Activated CD8-positive, alpha-beta T cell treated with anti-CD3 and anti-CD28 coated beads for 36 hours (primary cell): ENCODE measurements at regions of chr19 and their contacts with region 1.

Region 1: GRCh38 chr19:41353466-41354342 is at the start of gene TGFB1:
- DNase-seq: peak; percentile 94
- ATAC-seq: peak; percentile 59
- H3K4me3 Mint-ChIP-seq: peak within 1 kb of the TSS; percentile 100
- H3K27ac Mint-ChIP-seq: peak within 1 kb of the TSS; percentile 99
- H3K4me1 Mint-ChIP-seq: peaks cover 60% of the 10 kb centered on the region
- H3K27me3 Mint-ChIP-seq: no peaks in the 10 kb centered on the region
- CTCF ChIP-seq: peak; percentile 83
- total RNA-seq, gene TGFB1: 112 to 123 TPM

Region 2: DNA sequence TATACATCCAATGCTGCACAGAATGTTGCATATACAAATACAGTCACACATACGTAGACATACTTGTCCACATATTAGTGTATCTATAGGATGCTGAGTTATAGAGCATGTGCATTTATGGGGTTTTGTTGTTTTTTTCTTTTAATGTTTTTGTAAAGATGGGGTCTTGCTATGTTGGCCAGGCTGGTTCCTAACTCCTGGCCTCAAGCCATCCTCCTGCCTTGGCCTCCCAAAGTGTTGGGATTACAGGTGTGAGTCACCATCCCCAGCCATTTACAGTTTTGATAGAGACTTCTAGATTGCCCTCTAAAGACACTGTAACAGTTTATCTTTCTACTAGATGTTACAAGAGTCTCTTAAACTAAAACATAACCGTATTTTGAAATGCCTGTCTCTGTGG is 75.2 kb before region 1 on chr19:
- CTCF ChIA-PET with region 1: no interaction called
- POLR2A ChIA-PET with region 1: no interaction called
- intact Hi-C with region 1: no loop called
- DNase-seq: no peak
- ATAC-seq: no peak
- H3K4me3 Mint-ChIP-seq: no peak overlapping the region
- H3K27ac Mint-ChIP-seq: no peak overlapping the region
- H3K4me1 Mint-ChIP-seq: no peaks in the 10 kb centered on the region
- H3K27me3 Mint-ChIP-seq: no peaks in the 10 kb centered on the region
- CTCF ChIP-seq: no peak

Region 3: GRCh38 chr19:41363753-41364523 is 10.2 kb after region 1 on chr19 and contains the start of gene B9D2:
- CTCF ChIA-PET with region 1: interaction called, 19 read pairs
- POLR2A ChIA-PET with region 1: interaction called, 30 read pairs
- intact Hi-C with region 1: no loop called
- DNase-seq: peak; percentile 99
- ATAC-seq: peak; percentile 96
- H3K4me3 Mint-ChIP-seq: peak within 1 kb of the TSS; percentile 96
- H3K27ac Mint-ChIP-seq: peak within 1 kb of the TSS; percentile 99
- H3K4me1 Mint-ChIP-seq: peaks cover 28% of the 10 kb centered on the region
- H3K27me3 Mint-ChIP-seq: no peaks in the 10 kb centered on the region
- CTCF ChIP-seq: no peak
- total RNA-seq, gene B9D2: 3.1 to 5.1 TPM

Region 4: DNA sequence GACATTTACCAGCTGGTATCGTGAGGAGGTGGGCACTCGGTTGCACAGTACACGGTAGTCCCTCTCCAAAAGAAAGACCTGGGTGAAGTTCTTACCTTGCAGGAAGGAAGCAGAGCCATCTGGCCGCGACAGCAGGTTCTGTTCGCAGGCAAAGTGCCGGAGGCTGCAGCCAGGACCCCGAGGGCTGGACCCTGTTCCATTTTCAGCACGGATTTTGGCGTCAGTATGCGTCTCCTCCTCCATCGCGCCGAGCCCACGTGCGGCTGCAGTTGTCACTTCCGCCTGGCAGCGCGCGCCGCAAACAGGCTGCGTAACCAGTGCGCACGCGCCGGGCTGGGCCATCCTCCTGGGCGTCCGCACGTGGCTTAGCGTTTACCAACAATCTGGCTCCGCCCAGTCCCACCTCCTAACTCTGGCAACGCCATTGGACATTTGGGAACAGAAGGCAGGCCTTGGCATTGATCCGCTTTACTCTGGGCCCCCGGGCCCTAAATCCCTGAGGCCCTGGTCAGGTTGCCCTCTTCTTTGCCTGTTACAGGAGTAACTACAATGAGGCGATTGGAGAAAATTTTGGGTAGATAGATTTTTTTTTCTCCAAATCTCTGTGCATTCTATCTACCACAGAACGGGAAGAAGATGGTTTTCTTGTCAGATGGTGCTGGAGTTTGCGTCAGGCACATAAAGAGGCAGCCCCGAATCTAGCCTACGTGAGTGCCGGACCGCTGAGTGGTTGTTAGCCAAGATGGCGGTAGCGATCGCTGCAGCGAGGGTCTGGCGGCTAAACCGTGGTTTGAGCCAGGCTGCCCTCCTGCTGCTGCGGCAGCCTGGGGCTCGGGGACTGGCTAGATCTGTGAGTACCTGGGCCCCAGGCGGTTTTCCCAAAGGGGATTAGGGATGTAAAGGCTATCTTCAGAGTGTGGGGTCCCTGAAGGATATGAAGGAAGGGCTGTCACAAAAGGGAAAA is 43.7 kb after region 1 on chr19 and contains the starts of genes BCKDHA and EXOSC5:
- CTCF ChIA-PET with region 1: no interaction called
- POLR2A ChIA-PET with region 1: interaction called, 6 read pairs
- intact Hi-C with region 1: loop called (anchors 5 kb)
- DNase-seq: peak; percentile 99
- ATAC-seq: peak; percentile 99
- H3K4me3 Mint-ChIP-seq: peak within 1 kb of the TSS; percentile 96
- H3K27ac Mint-ChIP-seq: peak within 1 kb of the TSS; percentile 99
- H3K4me1 Mint-ChIP-seq: peaks cover 38% of the 10 kb centered on the region
- H3K27me3 Mint-ChIP-seq: no peaks in the 10 kb centered on the region
- CTCF ChIP-seq: no peak
- total RNA-seq, gene BCKDHA: 32.3 to 36.9 TPM
- total RNA-seq, gene EXOSC5: 46.6 to 47.0 TPM